Activated T-helper 1 cell treated with anti-CD3 and anti-CD28 coated beads, Interleukin-12 subunit alpha, Interleukin-12 subunit beta, Interleukin-2, Interleukin-4 antibody, amounts not matched to agents 30 ng/mL and 10 ng/mL and 1 ng/mL, durations not matched to agents 14 hours and 24 hours and 36 hours (primary cell): ENCODE measurements at regions of chr1 and their contacts with region 1.

Region 1: GRCh38 chr1:112466078-112466660 is 42.6 kb upstream of the WNT2B start:
- DNase-seq: peak; percentile 81
- H3K4me3 Mint-ChIP-seq: peak overlapping the region; percentile 81
- H3K27ac Mint-ChIP-seq: no peak overlapping the region
- H3K4me1 Mint-ChIP-seq: peaks cover 18% of the 10 kb centered on the region
- H3K27me3 Mint-ChIP-seq: peaks cover 30% of the 10 kb centered on the region

Region 2: GRCh38 chr1:112390775-112391602 is 75.2 kb before region 1 on chr1:
- intact Hi-C with region 1: loop called (anchors 1 kb)
- DNase-seq: peak; percentile 75
- H3K4me3 Mint-ChIP-seq: peak overlapping the region; percentile 70
- H3K27ac Mint-ChIP-seq: peak overlapping the region; percentile 15
- H3K4me1 Mint-ChIP-seq: peaks cover 37% of the 10 kb centered on the region
- H3K27me3 Mint-ChIP-seq: peaks cover 1% of the 10 kb centered on the region

Region 3: DNA sequence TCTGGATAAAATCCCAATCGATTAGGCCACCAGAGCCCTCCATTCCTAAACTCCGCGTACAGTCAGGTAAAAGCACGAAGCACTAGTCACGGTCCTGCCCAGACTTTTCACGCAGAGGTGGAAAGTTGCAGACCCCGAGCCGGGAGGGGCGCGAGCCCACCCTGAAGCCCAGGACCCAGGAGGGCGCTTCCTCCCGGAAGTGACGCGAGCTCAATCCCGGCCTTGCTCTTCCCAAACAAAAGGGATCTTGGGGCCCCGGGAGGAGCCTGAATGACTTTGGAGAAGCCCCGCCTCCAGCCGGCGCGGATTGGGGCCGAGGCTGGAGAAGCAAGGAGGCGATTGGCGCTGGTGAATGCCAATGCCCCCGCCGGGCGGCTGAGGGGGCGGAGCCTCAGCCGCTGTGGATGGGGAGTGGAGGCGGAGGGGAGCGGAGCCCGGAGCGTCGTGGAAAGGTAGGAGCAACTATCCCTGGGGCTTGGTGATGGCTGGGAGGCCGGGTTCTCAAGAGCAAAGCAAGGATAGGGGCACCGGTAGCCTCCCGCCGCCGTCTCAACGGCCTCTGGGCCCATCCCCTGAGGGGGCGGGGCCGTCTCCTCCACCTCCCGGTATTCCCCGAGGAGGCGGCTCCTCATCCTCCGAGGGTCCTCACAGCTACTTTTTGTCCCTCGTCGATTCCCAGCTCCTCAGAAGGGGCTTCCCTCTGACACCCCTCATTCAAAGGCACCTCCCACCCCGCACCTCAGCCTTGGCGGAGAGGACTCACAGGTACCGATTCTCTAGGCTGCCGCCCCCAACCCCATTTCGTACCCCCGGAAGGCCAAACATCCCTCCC is 70.1 kb before region 1 on chr1 and contains the start of gene CTTNBP2NL:
- intact Hi-C with region 1: loop called (anchors 1 kb)
- DNase-seq: peak; percentile 76
- H3K4me3 Mint-ChIP-seq: peak within 1 kb of the TSS; percentile 99
- H3K27ac Mint-ChIP-seq: peak within 1 kb of the TSS; percentile 85
- H3K4me1 Mint-ChIP-seq: peaks cover 49% of the 10 kb centered on the region
- H3K27me3 Mint-ChIP-seq: peaks cover 7% of the 10 kb centered on the region
- total RNA-seq, gene CTTNBP2NL: 3.9 and 4.7 TPM in 2 replicates

Region 4: GRCh38 chr1:112501810-112502641 is 35.9 kb after region 1 on chr1:
- intact Hi-C with region 1: loop called (anchors 2 kb)
- DNase-seq: peak; percentile 33
- H3K4me3 Mint-ChIP-seq: peak overlapping the region; percentile 63
- H3K27ac Mint-ChIP-seq: no peak overlapping the region
- H3K4me1 Mint-ChIP-seq: peaks cover 5% of the 10 kb centered on the region
- H3K27me3 Mint-ChIP-seq: peaks cover 62% of the 10 kb centered on the region